Activated CD8-positive, alpha-beta T cell treated with anti-CD3 and anti-CD28 coated beads for 36 hours (primary cell): ENCODE measurements at regions of chr1 and their contacts with region 1.

Region 1: GRCh38 chr1:194295685-194296084 is 1109.3 kb upstream of the B3GALT2 start:
- DNase-seq: peak; percentile 27
- ATAC-seq: peak; percentile 87
- H3K4me3 Mint-ChIP-seq: no peak overlapping the region
- H3K27ac Mint-ChIP-seq: peak overlapping the region; percentile 18
- H3K4me1 Mint-ChIP-seq: peaks cover 47% of the 10 kb centered on the region
- H3K27me3 Mint-ChIP-seq: no peaks in the 10 kb centered on the region
- CTCF ChIP-seq: peak; percentile 73

Region 2: GRCh38 chr1:193183019-193183627 is 1112.6 kb before region 1 on chr1:
- CTCF ChIA-PET with region 1: no interaction called
- POLR2A ChIA-PET with region 1: no interaction called
- intact Hi-C with region 1: loop called (anchors 2 kb)
- DNase-seq: no peak
- ATAC-seq: peak; percentile 79
- H3K4me3 Mint-ChIP-seq: no peak overlapping the region
- H3K27ac Mint-ChIP-seq: no peak overlapping the region
- H3K4me1 Mint-ChIP-seq: peaks cover 32% of the 10 kb centered on the region
- H3K27me3 Mint-ChIP-seq: no peaks in the 10 kb centered on the region
- CTCF ChIP-seq: peak; percentile 83

Region 3: DNA sequence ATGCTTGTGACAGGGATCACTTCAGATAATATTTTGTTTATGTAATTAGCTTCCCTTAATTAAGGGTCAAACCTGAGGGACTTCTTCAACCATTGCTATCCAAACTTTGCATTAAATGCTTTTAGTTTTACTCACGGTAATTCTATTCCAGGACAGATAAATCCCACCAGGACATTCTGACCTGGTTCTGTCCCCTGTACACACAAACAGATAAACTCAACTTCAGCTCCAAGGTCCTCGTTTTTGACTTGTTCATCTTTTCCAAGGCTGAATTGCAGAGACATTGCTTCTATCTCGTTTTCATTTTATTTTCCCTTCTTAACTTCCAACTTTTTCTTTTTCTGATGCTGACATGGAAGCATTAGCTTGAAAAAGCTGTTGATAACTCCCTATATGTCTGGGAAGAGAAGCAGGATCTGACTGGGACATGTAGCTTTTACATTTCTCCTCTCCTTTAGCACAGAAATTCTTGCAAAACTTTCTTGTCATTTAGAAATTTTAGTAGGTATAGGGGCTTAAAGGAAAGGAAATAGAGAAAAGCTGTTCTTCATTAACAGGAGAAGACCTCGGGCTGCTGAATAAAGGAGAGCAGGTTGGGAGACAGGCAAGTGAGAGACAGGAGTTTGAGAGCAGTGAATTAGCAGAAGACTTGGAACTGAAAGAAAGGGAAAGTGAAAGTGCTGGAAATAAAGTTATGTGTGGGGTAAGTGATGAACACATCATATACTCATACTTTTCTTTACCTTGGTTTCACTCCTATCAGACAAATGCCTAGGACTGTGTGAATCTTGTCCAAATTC is 877.5 kb before region 1 on chr1:
- CTCF ChIA-PET with region 1: no interaction called
- POLR2A ChIA-PET with region 1: no interaction called
- intact Hi-C with region 1: loop called (anchors 10 kb)
- DNase-seq: no peak
- ATAC-seq: peak; percentile 90
- H3K4me3 Mint-ChIP-seq: peak overlapping the region; percentile 66
- H3K27ac Mint-ChIP-seq: peak overlapping the region; percentile 83
- H3K4me1 Mint-ChIP-seq: peaks cover 30% of the 10 kb centered on the region
- H3K27me3 Mint-ChIP-seq: no peaks in the 10 kb centered on the region
- CTCF ChIP-seq: no peak

Region 4: DNA sequence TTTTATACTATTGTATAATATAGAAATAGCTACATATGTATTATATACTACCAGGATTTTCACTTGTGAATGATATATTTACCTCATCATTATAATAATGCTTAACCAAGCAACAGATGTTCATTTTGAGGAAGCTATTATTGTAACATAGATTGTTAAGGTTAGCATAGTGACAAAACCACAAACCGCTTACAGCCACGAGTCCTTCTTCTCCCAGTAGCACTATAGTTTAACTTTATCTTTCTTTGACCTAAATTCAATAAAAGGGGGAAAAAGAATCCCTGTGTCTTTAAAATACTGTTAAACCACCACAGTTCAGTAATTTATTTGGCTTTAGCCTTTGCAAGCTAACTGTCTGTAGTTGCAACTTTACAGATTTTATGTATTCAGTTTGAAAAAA is 69.9 kb before region 1 on chr1:
- CTCF ChIA-PET with region 1: no interaction called
- POLR2A ChIA-PET with region 1: no interaction called
- intact Hi-C with region 1: loop called (anchors 10 kb)
- DNase-seq: peak; percentile 22
- ATAC-seq: peak; percentile 51
- H3K4me3 Mint-ChIP-seq: no peak overlapping the region
- H3K27ac Mint-ChIP-seq: no peak overlapping the region
- H3K4me1 Mint-ChIP-seq: peaks cover 20% of the 10 kb centered on the region
- H3K27me3 Mint-ChIP-seq: no peaks in the 10 kb centered on the region
- CTCF ChIP-seq: no peak